BJ (cell line): ENCODE measurements at regions of chr16 and their contacts with region 1.

Region 1: GRCh38 chr16:30628627-30629540 is 18.7 kb upstream of the ZNF689 start:
- DNase-seq: no peak
- H3K4me3 ChIP-seq: no peak overlapping the region
- H3K27me3 ChIP-seq: no peaks in the 10 kb centered on the region
- CTCF ChIP-seq: peak; percentile 95

Region 2: DNA sequence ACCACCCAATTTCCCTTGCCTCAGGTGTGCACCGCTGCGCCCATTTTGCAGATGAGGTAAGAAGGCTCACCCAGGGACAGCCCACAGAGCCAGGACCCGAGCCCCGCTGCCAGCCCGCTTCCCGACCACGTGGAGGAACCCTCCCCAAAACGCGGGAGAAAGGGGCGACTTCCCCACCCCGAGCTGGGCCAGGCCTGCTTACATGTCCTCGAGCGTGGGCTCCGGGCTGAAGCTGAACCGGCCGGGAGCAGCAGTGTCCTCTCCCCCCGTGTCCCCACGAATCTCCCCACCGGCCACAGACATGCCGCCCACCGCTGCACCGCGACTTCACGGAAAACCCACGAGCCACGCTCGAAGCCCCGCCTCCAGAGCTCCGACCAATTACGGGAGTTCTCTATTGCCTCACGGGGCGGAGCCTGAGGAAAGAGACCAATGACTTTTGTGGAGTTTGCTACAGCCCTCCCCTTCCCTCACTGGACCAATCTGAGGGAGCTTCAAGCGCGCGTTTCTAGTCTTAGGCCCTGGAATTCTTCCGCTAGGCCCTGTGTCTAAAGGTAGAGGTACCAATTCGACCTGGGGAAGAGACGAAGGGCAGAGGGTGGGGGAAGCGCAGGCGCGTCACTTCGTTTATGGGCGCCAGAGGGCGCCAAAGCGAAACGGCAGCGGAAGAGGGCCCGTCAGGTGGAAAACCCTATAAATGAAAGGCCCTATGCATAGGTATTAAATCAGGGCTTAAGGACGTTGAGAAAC is 199.0 kb before region 1 on chr16 and contains the start of gene DCTPP1:
- CTCF ChIA-PET with region 1: interaction called, 12 read pairs
- POLR2A ChIA-PET with region 1: no interaction called
- DNase-seq: peak; percentile 92
- H3K4me3 ChIP-seq: peak within 1 kb of the TSS; percentile 94
- H3K27me3 ChIP-seq: peaks cover 3% of the 10 kb centered on the region
- CTCF ChIP-seq: peak; percentile 76
- polyA plus RNA-seq, gene DCTPP1: 27.5 and 33.9 TPM in 2 replicates

Region 3: GRCh38 chr16:30615358-30616091 is 13.4 kb before region 1 on chr16:
- CTCF ChIA-PET with region 1: interaction called, 11 read pairs
- POLR2A ChIA-PET with region 1: no interaction called
- DNase-seq: no peak
- H3K4me3 ChIP-seq: no peak overlapping the region
- H3K27me3 ChIP-seq: no peaks in the 10 kb centered on the region
- CTCF ChIP-seq: peak; percentile 56

Region 4: GRCh38 chr16:30957456-30958174 is 328.7 kb after region 1 on chr16 and contains the start of gene SETD1A:
- CTCF ChIA-PET with region 1: no interaction called
- POLR2A ChIA-PET with region 1: no interaction called
- DNase-seq: no peak
- H3K4me3 ChIP-seq: peak within 1 kb of the TSS; percentile 84
- H3K27me3 ChIP-seq: no peaks in the 10 kb centered on the region
- CTCF ChIP-seq: no peak
- polyA plus RNA-seq, gene SETD1A: 0.96 and 1.4 TPM in 2 replicates